PC-3 (cell line): ENCODE measurements at regions of chrX and their contacts with region 1.

Region 1: DNA sequence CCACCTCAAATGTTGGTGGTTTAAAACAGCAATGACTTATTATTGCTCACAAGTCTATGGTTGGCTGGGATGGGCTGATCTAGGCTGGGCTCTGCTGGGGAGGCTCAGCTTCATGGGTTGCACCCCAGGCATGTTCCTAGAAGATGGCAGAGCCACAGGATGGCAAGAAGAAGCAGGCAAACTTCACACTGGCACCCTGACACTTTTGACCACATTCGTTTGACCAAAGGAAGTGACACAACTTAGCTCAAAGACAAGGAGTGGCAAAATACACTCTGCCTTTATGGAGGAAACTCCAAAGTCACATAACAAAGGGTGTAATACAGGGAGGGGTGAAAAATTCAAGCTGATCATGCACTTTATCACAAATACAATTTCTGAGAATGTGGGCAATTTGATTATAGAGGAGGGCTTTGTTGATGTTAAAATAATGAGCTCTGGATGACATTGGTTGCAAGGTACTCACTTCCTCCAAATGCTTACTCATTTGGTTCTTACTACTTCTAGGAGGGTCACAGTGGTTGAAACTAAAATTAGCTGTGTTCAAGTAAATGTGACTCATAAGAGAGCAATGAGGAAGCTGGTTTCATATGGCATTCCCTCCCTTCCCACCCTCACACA is 249.2 kb upstream of the RPS6KA3 start:
- DNase-seq: peak; percentile 90
- ATAC-seq: peak; percentile 79
- H3K4me3 ChIP-seq: peak overlapping the region; percentile 4; the same call in 1 of the 2 replicates
- H3K27ac ChIP-seq: peak overlapping the region; percentile 98
- H3K4me1 ChIP-seq: peaks cover 55% of the 10 kb centered on the region
- H3K27me3 ChIP-seq: no peaks in the 10 kb centered on the region
- CTCF ChIP-seq: no peak

Region 2: DNA sequence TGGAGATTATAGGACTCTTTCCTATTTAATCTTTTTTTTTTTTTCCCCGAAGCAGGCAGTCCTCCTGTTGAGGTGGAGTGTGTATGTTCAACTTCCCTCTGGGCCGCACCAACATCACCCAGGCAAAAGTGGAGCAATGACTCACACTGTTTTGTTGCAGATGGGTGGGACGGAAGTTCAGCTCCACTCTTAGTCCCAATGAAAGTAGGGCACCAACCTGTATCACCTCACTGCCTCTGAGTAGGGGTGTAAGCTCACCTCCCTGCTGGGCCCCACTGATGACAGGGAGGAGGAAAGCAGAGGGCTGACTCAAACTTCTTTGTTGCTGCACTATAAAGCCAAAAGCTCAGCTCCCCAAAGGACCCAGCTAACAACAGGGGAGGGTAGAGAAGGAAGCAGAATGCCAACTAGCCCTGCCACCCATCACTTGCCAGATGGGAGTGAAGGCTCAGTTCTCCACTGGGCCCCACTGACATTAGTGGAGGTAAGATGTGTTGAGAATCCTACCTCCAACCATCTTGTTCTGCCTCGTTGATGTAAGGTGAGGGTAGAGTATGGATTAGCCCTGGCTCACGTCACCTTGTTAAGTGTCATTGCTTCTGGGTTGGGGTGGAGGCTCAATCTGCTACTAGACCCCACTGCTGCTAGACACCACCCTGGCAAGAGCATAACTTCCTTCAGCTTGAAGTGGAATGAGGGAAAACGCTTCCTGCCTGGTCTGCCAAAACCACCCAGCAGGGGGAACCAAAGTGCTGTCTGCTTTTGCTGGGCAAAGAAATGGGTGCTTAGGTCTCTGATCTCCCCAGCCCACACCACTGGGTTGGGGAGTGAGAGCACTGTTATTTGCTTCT is 263.3 kb before region 1 on chrX:
- CTCF ChIA-PET with region 1: interaction called, 5 read pairs
- POLR2A ChIA-PET with region 1: interaction called, 3 read pairs
- intact Hi-C with region 1: loop called (anchors 5 kb)
- DNase-seq: peak; percentile 81
- ATAC-seq: peak; percentile 80
- H3K4me3 ChIP-seq: no peak overlapping the region
- H3K27ac ChIP-seq: no peak overlapping the region
- H3K4me1 ChIP-seq: peaks cover 29% of the 10 kb centered on the region
- H3K27me3 ChIP-seq: no peaks in the 10 kb centered on the region
- CTCF ChIP-seq: peak; percentile 75

Region 3: DNA sequence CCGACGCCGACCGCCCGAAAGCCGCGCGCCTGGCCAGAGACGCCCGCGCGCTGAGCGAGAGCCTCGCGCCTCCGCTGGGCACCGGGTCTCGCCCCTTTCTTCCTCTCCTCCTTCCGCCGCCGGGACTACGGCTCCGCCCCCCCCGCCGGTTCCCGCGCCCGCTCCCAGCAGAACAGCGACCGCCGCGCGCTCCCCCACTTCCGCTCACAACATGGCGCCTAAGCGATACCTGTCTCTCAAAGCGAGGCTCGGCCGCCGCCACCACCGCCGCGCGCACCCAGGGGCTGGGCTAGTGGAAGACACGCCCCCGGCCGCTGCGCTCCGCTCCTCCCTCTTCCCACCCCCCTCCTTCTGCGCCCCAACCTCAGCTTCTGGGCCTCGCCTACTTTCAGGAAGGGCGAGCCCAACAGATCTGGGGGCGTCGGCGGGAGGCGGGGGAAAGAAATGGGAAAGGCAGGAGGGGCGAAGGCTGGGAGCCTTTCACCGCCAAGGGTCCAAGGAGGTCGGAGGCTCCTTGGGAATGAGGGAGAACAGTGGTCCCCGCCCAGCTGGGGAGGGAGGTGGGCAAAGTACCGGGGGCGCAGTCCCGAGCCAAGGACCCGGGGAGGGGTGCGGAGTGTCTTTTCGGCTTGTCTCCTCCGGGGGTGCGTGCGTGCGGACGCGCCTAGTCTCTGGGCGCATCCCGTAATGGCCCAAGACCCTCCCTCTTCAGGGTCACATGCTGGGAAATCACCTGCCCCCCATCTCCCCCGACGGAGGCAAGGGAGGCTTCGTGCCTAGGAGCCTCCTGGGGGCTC is 248.9 kb before region 1 on chrX and contains the start of gene RPS6KA3:
- CTCF ChIA-PET with region 1: no interaction called
- POLR2A ChIA-PET with region 1: no interaction called
- intact Hi-C with region 1: loop called (anchors 2 kb)
- DNase-seq: peak; percentile 82
- ATAC-seq: peak; percentile 72
- H3K4me3 ChIP-seq: peak within 1 kb of the TSS; percentile 84
- H3K27ac ChIP-seq: peak within 1 kb of the TSS; percentile 67
- H3K4me1 ChIP-seq: peaks cover 49% of the 10 kb centered on the region
- H3K27me3 ChIP-seq: no peaks in the 10 kb centered on the region
- CTCF ChIP-seq: no peak
- total RNA-seq, gene RPS6KA3: 22.8 and 24.6 TPM in 2 replicates

Region 4: DNA sequence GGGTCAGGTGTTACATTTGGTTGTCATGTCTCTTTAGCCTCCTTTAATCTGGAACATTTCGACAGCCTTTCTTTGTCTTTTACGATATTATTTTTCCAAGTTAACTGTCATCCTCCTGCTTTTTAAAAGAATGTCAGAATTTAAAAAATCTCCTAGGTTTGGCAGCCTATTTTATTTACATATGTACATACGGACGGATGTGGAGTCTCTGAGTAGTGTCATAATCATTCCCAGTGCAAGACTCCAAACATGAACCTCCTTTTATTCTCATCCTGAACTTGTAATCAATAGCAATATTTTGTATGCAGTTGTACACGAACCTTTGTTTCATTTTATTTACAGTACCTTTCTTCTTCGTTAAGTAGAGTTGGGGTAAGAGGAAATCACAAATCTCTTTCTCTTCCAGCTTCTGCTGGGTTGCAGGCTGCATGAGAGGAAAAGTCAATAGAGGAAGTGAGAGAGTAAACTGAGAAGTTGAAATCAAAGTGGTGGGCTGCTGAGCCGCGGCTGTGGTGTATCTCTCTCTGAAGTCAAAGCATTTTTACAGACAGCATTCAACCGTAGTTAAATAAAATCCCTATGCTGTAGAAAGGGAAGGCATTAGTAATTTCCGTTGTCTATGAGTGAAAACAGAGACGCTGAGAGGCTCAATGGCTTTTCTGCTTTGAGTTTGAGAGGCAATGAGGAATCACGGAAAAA is 195.3 kb before region 1 on chrX:
- CTCF ChIA-PET with region 1: interaction called, 3 read pairs
- POLR2A ChIA-PET with region 1: no interaction called
- intact Hi-C with region 1: loop called (anchors 1 kb)
- DNase-seq: peak; percentile 52
- ATAC-seq: peak; percentile 83
- H3K4me3 ChIP-seq: peak overlapping the region; percentile 61
- H3K27ac ChIP-seq: peak overlapping the region; percentile 62
- H3K4me1 ChIP-seq: peaks cover 18% of the 10 kb centered on the region; the same call in 1 of the 2 replicates
- H3K27me3 ChIP-seq: no peaks in the 10 kb centered on the region
- CTCF ChIP-seq: no peak

Region 5: DNA sequence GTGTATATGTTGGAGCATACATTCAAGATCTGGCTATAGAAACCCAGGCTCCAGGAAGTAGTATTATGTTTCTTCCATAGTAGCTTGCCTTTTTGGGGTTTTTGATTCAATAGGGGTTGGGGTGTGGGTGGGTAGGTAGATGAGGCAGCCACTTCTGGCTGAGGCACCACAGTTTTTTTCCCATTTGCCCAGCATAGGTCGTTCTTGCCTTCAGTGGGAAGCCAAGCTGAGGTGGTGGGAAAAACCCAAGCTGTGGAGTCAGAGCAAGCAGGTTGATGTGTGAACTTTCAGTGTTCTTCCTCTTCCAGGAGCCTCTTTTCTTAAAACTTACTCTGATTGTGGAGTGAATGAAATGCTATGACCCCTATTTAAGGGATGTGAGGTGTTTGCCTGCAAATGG is 182.3 kb before region 1 on chrX:
- CTCF ChIA-PET with region 1: no interaction called
- POLR2A ChIA-PET with region 1: interaction called, 13 read pairs
- intact Hi-C with region 1: no loop called
- DNase-seq: no peak
- ATAC-seq: no peak
- H3K4me3 ChIP-seq: no peak overlapping the region
- H3K27ac ChIP-seq: no peak overlapping the region
- H3K4me1 ChIP-seq: no peaks in the 10 kb centered on the region
- H3K27me3 ChIP-seq: no peaks in the 10 kb centered on the region
- CTCF ChIP-seq: no peak

Region 6: DNA sequence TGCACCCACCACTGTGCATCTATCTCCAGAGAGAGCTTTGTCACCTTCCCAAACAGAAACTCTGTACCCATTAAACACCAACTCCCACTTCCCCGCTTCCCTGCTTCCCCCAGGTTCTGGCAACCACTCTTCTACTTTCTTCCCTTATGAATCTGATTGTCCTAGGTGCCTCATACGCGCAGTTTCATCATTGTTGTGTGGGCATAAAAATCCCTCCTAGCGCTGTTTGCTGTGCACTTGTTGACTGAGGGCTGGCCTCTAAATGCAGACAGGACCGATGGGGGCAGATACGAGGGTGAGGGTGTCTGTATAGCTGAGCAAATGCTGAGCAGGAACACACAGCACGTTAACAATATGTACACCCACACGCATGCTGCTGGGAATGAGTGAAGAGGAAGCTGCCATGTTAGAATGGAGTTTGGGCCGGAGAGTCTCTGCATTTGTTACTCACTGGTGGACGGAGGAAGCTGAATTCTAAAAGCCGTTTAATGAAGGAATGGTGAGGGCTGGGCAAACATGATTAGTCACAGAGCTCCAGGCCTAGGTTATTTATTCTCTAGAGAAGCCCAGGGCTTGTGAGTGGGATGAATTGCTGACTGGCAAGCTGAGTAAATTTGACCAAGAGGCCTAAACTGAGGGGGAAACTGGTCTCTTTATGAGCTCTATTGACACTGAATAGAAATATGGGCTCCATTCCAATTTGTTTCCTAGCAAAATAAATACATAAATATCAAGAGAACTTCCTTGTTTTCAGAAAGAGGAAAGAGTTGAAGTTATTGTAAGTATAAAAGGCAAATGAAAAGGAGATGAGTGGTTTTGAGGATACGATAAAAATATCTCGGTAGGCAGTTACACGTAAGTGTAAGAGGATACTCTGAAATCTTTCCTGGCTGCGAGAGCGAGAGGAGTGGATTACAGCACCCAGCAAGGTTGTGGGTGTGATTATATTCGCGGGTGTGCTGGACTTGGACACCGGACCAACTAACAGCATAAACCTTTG is 153.4 kb before region 1 on chrX:
- CTCF ChIA-PET with region 1: no interaction called
- POLR2A ChIA-PET with region 1: no interaction called
- intact Hi-C with region 1: loop called (anchors 5 kb)
- DNase-seq: peak; percentile 89
- ATAC-seq: peak; percentile 92
- H3K4me3 ChIP-seq: peak overlapping the region; percentile 58
- H3K27ac ChIP-seq: peak overlapping the region; percentile 97
- H3K4me1 ChIP-seq: peaks cover 26% of the 10 kb centered on the region
- H3K27me3 ChIP-seq: no peaks in the 10 kb centered on the region
- CTCF ChIP-seq: no peak

Region 7: GRCh38 chrX:20382518-20383297 is 133.2 kb before region 1 on chrX:
- CTCF ChIA-PET with region 1: no interaction called
- POLR2A ChIA-PET with region 1: no interaction called
- intact Hi-C with region 1: loop called (anchors 5 kb)
- DNase-seq: peak; percentile 60
- ATAC-seq: peak; percentile 62
- H3K4me3 ChIP-seq: no peak overlapping the region
- H3K27ac ChIP-seq: no peak overlapping the region
- H3K4me1 ChIP-seq: peaks cover 26% of the 10 kb centered on the region
- H3K27me3 ChIP-seq: no peaks in the 10 kb centered on the region
- CTCF ChIP-seq: no peak

Region 8: DNA sequence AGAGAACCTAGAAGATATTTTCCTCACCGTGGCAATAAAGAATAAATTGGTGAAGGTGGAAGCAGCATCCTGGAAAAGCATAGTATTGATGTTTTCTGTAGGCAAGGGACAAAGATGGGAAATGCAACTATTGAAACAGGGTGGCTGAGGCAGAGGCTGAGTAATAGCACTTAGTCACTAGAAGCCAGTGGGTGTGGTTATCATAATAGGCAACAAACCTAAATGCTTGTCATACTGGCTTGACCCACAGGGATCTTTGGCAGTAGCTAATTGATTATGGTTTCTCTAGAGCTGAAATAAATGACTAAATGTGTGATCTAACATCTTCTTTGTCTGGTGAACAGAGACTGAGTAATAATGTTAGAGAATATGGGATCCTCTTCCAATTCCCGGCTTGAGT is 104.4 kb after region 1 on chrX:
- CTCF ChIA-PET with region 1: no interaction called
- POLR2A ChIA-PET with region 1: no interaction called
- intact Hi-C with region 1: no loop called
- DNase-seq: peak; percentile 76
- ATAC-seq: peak; percentile 48
- H3K4me3 ChIP-seq: no peak overlapping the region
- H3K27ac ChIP-seq: peak overlapping the region; percentile 57
- H3K4me1 ChIP-seq: peaks cover 13% of the 10 kb centered on the region
- H3K27me3 ChIP-seq: no peaks in the 10 kb centered on the region
- CTCF ChIP-seq: no peak